ENCODE measurements at regions of chr3 and their contacts with region 1.

Region 1: GRCh38 chr3:29335438-29335837 is 54.6 kb downstream of the RBMS3 start:
- DNase-seq: peak; percentile 96
- ATAC-seq: peak; percentile 99
- H3K4me3 ChIP-seq: peak overlapping the region; percentile 52
- H3K27ac ChIP-seq: peak overlapping the region; percentile 64
- H3K4me1 ChIP-seq: peaks cover 21% of the 10 kb centered on the region
- H3K27me3 ChIP-seq: no peaks in the 10 kb centered on the region
- CTCF ChIP-seq: no peak

Region 2: DNA sequence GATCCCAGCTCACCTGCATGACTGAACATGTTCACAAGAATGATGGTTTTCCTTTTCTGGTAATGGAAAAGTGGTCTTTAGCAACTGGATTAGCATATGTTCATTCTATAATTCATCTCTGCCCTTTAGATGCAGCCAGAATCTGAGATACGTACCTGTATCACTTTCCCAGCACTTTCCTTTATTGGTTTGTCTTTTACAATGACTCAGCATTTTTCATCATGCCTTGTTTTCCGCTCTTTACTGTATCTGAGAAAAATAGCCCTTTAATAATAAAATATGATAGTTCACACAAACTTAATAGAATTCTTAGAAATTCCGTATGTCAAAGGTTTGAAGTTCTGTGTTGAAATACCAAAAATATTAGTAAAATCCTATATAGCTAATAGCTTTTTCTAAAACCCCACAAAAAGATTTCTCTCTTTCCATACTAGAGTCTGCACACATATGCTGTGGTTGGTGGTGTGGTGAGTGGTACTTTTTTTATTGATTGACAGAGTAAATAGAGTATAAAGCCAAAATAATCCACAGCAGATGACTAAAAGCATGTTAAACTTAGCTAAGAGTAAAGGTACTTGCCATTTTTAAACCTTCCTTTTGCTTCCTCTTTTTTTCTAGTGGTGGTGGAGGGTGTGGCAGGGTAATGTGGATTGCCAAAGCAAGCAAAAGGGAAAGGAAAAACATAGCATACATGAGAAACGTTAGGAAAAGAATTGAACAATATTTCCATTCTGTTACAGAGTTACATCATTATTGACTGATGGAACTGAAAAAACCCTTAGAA is 383.5 kb before region 1 on chr3:
- CTCF ChIA-PET with region 1: no interaction called
- POLR2A ChIA-PET with region 1: no interaction called
- intact Hi-C with region 1: loop called (anchors 10 kb)
- DNase-seq: peak; percentile 77
- ATAC-seq: peak; percentile 97
- H3K4me3 ChIP-seq: no peak overlapping the region; the same call in 1 of the 2 replicates
- H3K27ac ChIP-seq: peak overlapping the region; percentile 71
- H3K4me1 ChIP-seq: peaks cover 20% of the 10 kb centered on the region
- H3K27me3 ChIP-seq: no peaks in the 10 kb centered on the region
- CTCF ChIP-seq: no peak

Region 3: GRCh38 chr3:29324180-29324651 is 11.2 kb before region 1 on chr3:
- CTCF ChIA-PET with region 1: no interaction called
- POLR2A ChIA-PET with region 1: interaction called, 4 read pairs
- intact Hi-C with region 1: loop called (anchors 1 kb)
- DNase-seq: peak; percentile 85
- ATAC-seq: peak; percentile 99
- H3K4me3 ChIP-seq: peak overlapping the region; percentile 31
- H3K27ac ChIP-seq: peak overlapping the region; percentile 80
- H3K4me1 ChIP-seq: peaks cover 22% of the 10 kb centered on the region
- H3K27me3 ChIP-seq: no peaks in the 10 kb centered on the region
- CTCF ChIP-seq: no peak

Region 4: DNA sequence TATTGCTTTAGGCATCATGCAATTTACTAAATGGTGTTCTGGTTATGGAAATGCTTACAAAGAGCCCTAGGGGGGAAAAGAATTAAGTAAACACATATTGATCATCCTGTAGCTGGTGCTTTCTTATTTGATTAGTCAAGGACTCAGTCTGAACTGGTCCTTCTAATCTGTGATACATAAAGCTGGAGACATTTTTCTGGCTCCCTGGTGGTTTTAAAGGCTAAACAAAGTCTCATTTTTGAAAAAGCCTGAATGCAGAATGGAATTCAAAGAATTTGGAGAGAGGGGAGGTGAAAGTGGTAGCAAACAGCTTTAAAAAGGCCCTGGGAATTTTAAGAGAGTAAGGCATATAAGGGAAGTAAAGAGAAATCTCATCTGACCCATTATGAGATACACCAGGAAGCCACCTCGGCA is 95.1 kb after region 1 on chr3:
- CTCF ChIA-PET with region 1: interaction called, 3 read pairs
- POLR2A ChIA-PET with region 1: no interaction called
- intact Hi-C with region 1: loop called (anchors 10 kb)
- DNase-seq: peak; percentile 26
- ATAC-seq: peak; percentile 54
- H3K4me3 ChIP-seq: no peak overlapping the region
- H3K27ac ChIP-seq: no peak overlapping the region
- H3K4me1 ChIP-seq: peaks cover 12% of the 10 kb centered on the region
- H3K27me3 ChIP-seq: no peaks in the 10 kb centered on the region
- CTCF ChIP-seq: no peak

Region 5: GRCh38 chr3:29486096-29486495 is 150.7 kb after region 1 on chr3:
- CTCF ChIA-PET with region 1: no interaction called
- POLR2A ChIA-PET with region 1: no interaction called
- intact Hi-C with region 1: loop called (anchors 2 kb)
- DNase-seq: peak; percentile 88
- ATAC-seq: peak; percentile 93
- H3K4me3 ChIP-seq: peak overlapping the region; percentile 34; the same call in 1 of the 2 replicates
- H3K27ac ChIP-seq: peak overlapping the region; percentile 92
- H3K4me1 ChIP-seq: peaks cover 33% of the 10 kb centered on the region
- H3K27me3 ChIP-seq: no peaks in the 10 kb centered on the region
- CTCF ChIP-seq: no peak